Mammary epithelial cell (primary cell): ENCODE measurements at regions of chrX and their contacts with region 1.

Region 1: GRCh38 chrX:37578045-37578444 is 6.6 kb downstream of the LANCL3 start:
- DNase-seq: peak; percentile 84
- H3K4me3 ChIP-seq: no peak overlapping the region
- H3K27ac ChIP-seq: peak overlapping the region; percentile 48
- H3K4me1 ChIP-seq: peaks cover 12% of the 10 kb centered on the region
- H3K27me3 ChIP-seq: no peaks in the 10 kb centered on the region
- CTCF ChIP-seq: no peak

Region 2: DNA sequence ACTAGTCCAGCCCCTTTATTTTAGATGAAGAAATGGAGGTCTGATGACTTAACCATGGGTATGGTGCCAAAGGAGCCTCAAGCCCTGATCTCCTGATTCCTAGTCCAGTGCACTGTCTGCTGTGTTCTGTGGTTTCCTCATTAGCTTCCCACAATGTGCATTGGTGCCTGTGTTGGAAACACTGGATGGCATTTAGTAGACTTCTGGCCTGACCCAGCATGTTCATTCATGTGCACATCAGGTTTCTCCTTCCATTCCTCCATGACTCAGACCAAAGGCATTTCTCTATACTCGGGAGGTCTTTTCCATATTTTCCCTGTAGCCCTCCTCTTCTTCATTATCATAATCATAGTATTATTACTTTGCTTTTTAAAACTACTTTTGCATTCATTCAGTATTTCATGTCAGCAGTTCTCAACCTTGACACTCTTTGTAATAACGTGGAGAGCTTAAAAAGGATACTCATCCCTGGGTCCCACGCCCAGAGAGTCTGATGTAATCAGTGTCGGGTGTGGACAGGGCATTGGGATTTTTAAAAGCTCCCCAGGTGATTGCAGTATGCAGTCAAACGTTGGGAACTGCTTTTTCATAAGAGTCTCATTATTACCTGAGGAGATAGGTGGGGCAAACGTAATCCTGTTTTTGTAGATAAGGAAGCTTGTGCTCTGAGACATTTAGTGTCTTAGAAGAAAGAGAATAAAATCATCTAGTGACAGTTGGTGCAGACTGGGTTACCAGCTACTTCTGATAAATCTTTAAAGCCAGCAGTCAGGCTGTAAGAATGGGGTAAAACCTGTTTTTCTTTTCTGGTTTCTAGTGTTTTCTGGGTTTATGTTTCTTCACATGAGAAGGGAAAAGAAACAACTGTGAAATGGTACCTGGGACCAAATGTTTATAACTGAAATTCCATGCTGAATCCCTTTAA is 66.6 kb after region 1 on chrX:
- CTCF ChIA-PET with region 1: no interaction called
- dilution Hi-C with region 1: no loop called
- in situ Hi-C with region 1: no loop called
- intact Hi-C with region 1: loop called (anchors 1 kb)
- DNase-seq: peak; percentile 95
- H3K4me3 ChIP-seq: no peak overlapping the region
- H3K27ac ChIP-seq: peak overlapping the region; percentile 90
- H3K4me1 ChIP-seq: peaks cover 22% of the 10 kb centered on the region
- H3K27me3 ChIP-seq: no peaks in the 10 kb centered on the region
- CTCF ChIP-seq: no peak